Breast epithelium (tissue), 4 donors: ENCODE measurements at regions of chr22 and their contacts with region 1.

Region 1: DNA sequence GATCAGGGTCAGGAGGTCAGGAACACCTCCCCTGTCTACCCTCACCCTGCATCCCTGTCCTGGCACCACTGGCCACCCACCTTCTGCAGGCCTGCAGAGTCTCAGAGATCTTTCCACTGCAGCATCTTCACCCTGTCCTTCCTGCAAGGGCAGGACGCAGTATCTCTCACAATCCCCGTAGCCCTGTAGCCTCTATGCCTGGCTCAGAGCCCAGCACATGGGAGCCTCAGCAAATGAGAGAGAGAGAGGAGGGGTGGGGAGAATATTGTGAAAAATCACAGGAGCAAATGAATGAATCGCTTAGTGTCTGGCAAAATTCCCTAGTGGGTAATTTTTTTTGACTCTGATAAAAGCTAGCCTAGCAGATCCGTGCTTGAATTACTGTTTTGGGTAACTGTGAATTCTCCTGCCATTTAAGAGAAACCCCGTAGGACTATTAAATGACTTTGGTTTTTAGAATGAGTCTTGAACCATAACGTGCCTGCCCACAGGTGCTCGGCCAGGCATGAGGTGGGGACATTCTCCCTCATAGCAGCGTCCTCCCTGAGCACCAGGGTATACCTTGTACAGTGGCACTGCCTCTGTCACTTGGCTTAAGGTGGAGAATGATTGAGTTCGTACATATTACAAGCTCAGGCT is 91.5 kb downstream of the MORC2 start:
- DNase-seq: no peak
- H3K4me3 ChIP-seq: no peak overlapping the region
- H3K27ac ChIP-seq: no peak overlapping the region
- H3K4me1 ChIP-seq: no peaks in the 10 kb centered on the region
- H3K27me3 ChIP-seq: no peaks in the 10 kb centered on the region
- CTCF ChIP-seq: no peak
- POLR2A ChIP-seq: no peak

Region 2: DNA sequence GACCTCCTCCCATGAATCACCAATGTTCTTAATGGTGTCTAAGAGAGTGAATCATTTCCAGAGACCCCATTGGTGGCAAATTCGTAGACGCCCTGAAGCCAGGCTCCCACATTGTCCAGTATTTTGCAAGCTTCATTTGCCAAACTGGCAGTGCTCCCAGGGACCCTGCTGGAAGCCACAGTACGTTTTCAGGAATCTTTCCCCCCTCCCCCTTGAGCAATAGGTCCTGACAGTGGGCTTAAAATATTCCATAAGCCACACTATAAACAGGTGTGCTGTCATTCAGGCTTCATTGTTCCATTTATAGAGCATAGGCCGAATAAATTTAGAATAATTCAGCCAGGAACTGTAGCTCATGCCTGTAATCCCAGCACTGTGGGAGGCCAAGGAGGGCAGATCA is 33.8 kb before region 1 on chr22:
- intact Hi-C with region 1: loop called (anchors 2 kb)
- DNase-seq: no peak
- H3K4me3 ChIP-seq: no peak overlapping the region
- H3K27ac ChIP-seq: no peak overlapping the region
- H3K4me1 ChIP-seq: no peaks in the 10 kb centered on the region
- H3K27me3 ChIP-seq: no peaks in the 10 kb centered on the region
- CTCF ChIP-seq: no peak
- POLR2A ChIP-seq: no peak

Region 3: GRCh38 chr22:31911565-31912406 is 1034.8 kb after region 1 on chr22:
- intact Hi-C with region 1: no loop called
- DNase-seq: no peak
- H3K4me3 ChIP-seq: no peak overlapping the region
- H3K27ac ChIP-seq: no peak overlapping the region
- H3K4me1 ChIP-seq: no peaks in the 10 kb centered on the region
- H3K27me3 ChIP-seq: no peaks in the 10 kb centered on the region
- CTCF ChIP-seq: no peak
- POLR2A ChIP-seq: no peak